Activated naive CD4-positive, alpha-beta T cell treated with anti-CD3 and anti-CD28 coated beads for 36 hours (primary cell): ENCODE measurements at regions of chr22 and their contacts with region 1.

Region 1: DNA sequence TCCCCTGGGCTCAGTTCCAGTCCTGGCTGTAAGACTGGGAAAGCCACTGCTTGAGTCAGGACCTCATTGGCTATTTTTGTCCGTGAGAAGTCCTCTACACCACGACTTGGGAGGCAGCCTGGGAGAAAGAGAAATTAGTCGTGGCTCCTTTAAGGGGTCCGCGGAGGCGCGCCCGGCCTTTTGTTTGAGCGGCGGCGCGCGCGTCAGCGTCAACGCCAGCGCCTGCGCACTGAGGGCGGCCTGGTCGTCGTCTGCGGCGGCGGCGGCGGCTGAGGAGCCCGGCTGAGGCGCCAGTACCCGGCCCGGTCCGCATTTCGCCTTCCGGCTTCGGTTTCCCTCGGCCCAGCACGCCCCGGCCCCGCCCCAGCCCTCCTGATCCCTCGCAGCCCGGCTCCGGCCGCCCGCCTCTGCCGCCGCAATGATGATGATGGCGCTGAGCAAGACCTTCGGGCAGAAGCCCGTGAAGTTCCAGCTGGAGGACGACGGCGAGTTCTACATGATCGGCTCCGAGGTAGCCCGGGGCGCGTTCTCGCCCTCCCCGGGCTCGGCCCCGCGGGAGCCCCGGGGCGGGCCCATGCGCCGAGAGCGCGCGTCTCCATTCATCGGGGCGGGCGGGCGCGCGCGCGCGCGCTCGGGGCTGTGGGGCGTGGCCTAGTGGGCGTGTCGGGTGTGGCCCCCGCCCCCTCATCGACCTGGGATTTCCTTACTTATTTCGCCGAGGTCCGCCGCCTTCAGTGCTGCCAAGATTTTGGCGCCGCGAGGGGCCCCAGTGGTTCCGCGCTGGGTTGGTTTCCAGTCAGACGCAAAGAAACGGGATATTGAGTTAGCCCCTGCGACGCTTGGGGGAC is at the start of gene SMARCB1:
- DNase-seq: peak; percentile 89
- H3K4me3 Mint-ChIP-seq: peak within 1 kb of the TSS; percentile 89
- H3K27ac Mint-ChIP-seq: peak within 1 kb of the TSS; percentile 95
- H3K4me1 Mint-ChIP-seq: peaks cover 34% of the 10 kb centered on the region
- H3K27me3 Mint-ChIP-seq: no peaks in the 10 kb centered on the region
- total RNA-seq, gene SMARCB1: 75.3 to 89.1 TPM

Region 2: DNA sequence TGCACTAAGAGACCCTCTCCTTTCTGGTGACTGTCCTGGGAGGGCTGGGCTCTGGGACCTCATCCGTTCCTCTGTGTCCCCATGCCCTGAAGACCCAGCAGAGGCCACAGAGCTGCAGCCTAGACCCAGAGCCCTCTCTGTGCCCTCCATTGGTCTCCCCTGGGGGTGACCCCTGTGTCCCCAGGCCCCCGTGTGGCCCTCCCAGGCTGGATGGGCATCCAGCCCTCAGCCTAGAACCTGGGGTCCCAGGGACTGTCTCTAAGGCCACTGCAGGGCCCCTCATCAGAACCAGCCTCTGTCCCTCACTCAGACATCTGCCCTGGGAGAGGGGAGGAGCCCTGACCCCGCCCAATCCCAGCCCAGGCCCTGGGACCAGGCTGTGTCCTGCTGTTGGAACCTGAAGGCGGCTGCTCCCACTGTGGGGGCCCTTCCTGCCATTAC is 212.6 kb before region 1 on chr22:
- CTCF ChIA-PET with region 1: no interaction called
- intact Hi-C with region 1: no loop called
- DNase-seq: no peak
- H3K4me3 Mint-ChIP-seq: no peak overlapping the region
- H3K27ac Mint-ChIP-seq: no peak overlapping the region
- H3K4me1 Mint-ChIP-seq: no peaks in the 10 kb centered on the region
- H3K27me3 Mint-ChIP-seq: peaks cover 25% of the 10 kb centered on the region

Region 3: GRCh38 chr22:23826465-23827199 is 39.7 kb after region 1 on chr22:
- CTCF ChIA-PET with region 1: no interaction called
- intact Hi-C with region 1: no loop called
- DNase-seq: no peak
- H3K4me3 Mint-ChIP-seq: no peak overlapping the region
- H3K27ac Mint-ChIP-seq: peak overlapping the region; percentile 90
- H3K4me1 Mint-ChIP-seq: peaks cover 4% of the 10 kb centered on the region
- H3K27me3 Mint-ChIP-seq: no peaks in the 10 kb centered on the region

Region 4: GRCh38 chr22:23838681-23839468 is 51.9 kb after region 1 on chr22 and contains the start of gene DERL3:
- CTCF ChIA-PET with region 1: no interaction called
- intact Hi-C with region 1: loop called (anchors 1 kb)
- DNase-seq: peak; percentile 97
- H3K4me3 Mint-ChIP-seq: peak within 1 kb of the TSS; percentile 84
- H3K27ac Mint-ChIP-seq: peak within 1 kb of the TSS; percentile 37
- H3K4me1 Mint-ChIP-seq: peaks cover 16% of the 10 kb centered on the region
- H3K27me3 Mint-ChIP-seq: peaks cover 3% of the 10 kb centered on the region
- total RNA-seq, gene DERL3: 7.3 to 7.5 TPM

Region 5: GRCh38 chr22:23893943-23894709 is 107.2 kb after region 1 on chr22 and contains the start of gene MIF:
- CTCF ChIA-PET with region 1: no interaction called
- intact Hi-C with region 1: loop called (anchors 1 kb)
- DNase-seq: peak; percentile 96
- H3K4me3 Mint-ChIP-seq: peak within 1 kb of the TSS; percentile 95
- H3K27ac Mint-ChIP-seq: peak within 1 kb of the TSS; percentile 97
- H3K4me1 Mint-ChIP-seq: peaks cover 19% of the 10 kb centered on the region
- H3K27me3 Mint-ChIP-seq: no peaks in the 10 kb centered on the region
- total RNA-seq, gene MIF: 1,489 to 1,512 TPM

Region 6: GRCh38 chr22:23913661-23914353 is 126.8 kb after region 1 on chr22:
- CTCF ChIA-PET with region 1: no interaction called
- intact Hi-C with region 1: loop called (anchors 1 kb)
- DNase-seq: peak; percentile 100
- H3K4me3 Mint-ChIP-seq: peak overlapping the region; percentile 99
- H3K27ac Mint-ChIP-seq: peak overlapping the region; percentile 99
- H3K4me1 Mint-ChIP-seq: peaks cover 24% of the 10 kb centered on the region
- H3K27me3 Mint-ChIP-seq: no peaks in the 10 kb centered on the region

Region 7: GRCh38 chr22:24011735-24012068 is 224.7 kb after region 1 on chr22:
- CTCF ChIA-PET with region 1: no interaction called
- intact Hi-C with region 1: loop called (anchors 1 kb)
- DNase-seq: no peak
- H3K4me3 Mint-ChIP-seq: peak overlapping the region; percentile 95
- H3K27ac Mint-ChIP-seq: peak overlapping the region; percentile 89
- H3K4me1 Mint-ChIP-seq: peaks cover 25% of the 10 kb centered on the region
- H3K27me3 Mint-ChIP-seq: no peaks in the 10 kb centered on the region